ENCODE measurements at regions of chr5 and their contacts with region 1.

Region 1: GRCh38 chr5:27020973-27021372 is 17.4 kb downstream of the CDH9 start:
- DNase-seq: peak; percentile 48
- H3K4me3 Mint-ChIP-seq: no peak overlapping the region
- H3K27ac Mint-ChIP-seq: no peak overlapping the region
- H3K4me1 Mint-ChIP-seq: no peaks in the 10 kb centered on the region
- H3K27me3 Mint-ChIP-seq: no peaks in the 10 kb centered on the region
- CTCF ChIP-seq: peak; percentile 51

Region 2: DNA sequence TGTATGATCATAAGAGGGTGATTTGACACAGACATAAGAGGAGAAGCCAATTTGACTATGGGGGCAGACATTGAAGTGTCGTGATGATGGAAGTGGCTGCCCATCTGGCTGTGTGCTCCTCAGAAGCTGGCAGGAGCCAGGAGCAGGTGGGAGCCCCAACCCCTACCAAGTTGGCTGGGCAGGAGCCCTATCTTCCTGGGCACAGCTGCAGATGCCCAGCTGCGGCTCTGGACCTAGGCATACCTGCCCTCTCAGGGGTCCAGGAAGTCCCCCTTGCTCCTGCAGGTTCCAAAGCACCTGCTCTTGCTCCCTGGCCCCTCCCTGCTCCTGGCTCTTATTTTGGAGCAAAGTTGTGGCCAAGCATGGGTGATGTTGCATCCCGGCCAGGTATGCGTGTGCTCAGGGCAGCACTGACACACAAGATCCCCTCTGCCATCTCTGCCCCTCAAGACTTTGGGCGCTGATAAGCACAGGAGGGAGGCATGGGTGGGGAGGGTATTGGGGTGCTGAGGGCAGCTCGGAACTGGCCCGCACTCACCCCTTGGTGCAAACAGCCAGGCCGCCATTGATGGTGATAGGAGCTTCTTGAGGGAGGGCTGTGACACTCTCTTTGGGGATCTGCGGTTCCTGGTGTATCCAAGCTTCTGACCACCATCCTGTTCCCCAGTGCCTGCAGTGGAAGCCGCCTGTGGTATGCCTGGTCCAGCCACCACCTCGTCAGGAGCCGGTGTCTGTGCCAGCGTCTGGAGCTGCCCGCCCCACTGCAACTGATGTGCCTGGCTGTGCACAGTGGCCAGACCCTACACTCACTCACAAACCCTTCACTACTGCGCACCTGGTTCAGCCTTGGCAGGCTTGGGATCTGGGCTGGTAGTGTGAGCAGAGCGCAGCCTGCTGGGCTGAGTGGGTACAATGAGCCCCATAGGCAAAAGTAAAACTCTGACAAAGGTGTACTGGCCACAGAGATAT is 213.5 kb before region 1 on chr5:
- CTCF ChIA-PET with region 1: no interaction called
- POLR2A ChIA-PET with region 1: no interaction called
- intact Hi-C with region 1: no loop called
- DNase-seq: no peak
- H3K4me3 Mint-ChIP-seq: no peak overlapping the region
- H3K27ac Mint-ChIP-seq: no peak overlapping the region
- H3K4me1 Mint-ChIP-seq: no peaks in the 10 kb centered on the region
- H3K27me3 Mint-ChIP-seq: no peaks in the 10 kb centered on the region
- CTCF ChIP-seq: no peak

Region 3: GRCh38 chr5:27241569-27242251 is 220.7 kb after region 1 on chr5:
- CTCF ChIA-PET with region 1: no interaction called
- POLR2A ChIA-PET with region 1: no interaction called
- intact Hi-C with region 1: loop called (anchors 5 kb)
- DNase-seq: peak; percentile 94
- H3K4me3 Mint-ChIP-seq: peak overlapping the region; percentile 52
- H3K27ac Mint-ChIP-seq: peak overlapping the region; percentile 96
- H3K4me1 Mint-ChIP-seq: peaks cover 24% of the 10 kb centered on the region
- H3K27me3 Mint-ChIP-seq: no peaks in the 10 kb centered on the region
- CTCF ChIP-seq: peak; percentile 31

Region 4: GRCh38 chr5:28344803-28345433 is 1323.9 kb after region 1 on chr5:
- CTCF ChIA-PET with region 1: no interaction called
- POLR2A ChIA-PET with region 1: no interaction called
- intact Hi-C with region 1: loop called (anchors 5 kb)
- DNase-seq: peak; percentile 60
- H3K4me3 Mint-ChIP-seq: no peak overlapping the region
- H3K27ac Mint-ChIP-seq: no peak overlapping the region
- H3K4me1 Mint-ChIP-seq: no peaks in the 10 kb centered on the region
- H3K27me3 Mint-ChIP-seq: no peaks in the 10 kb centered on the region
- CTCF ChIP-seq: peak; percentile 64

Region 5: DNA sequence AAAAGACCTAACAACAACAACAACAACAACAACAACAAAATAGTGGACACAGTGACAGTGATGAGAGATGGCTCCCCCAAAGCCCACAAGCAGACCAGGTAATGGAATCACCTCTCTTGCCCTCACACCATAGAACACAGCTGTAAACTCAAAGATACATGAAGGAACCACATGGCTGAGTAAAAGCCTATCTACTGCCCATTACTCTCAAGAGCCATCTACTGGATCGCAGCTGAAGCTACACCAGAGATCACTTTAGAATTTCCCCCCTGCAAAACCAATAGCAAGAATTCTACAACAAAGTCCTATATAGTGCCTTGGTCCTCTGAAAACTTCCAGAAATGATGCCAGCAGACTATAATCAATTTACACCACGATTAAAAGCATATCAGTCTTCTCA is 1555.0 kb after region 1 on chr5:
- CTCF ChIA-PET with region 1: no interaction called
- POLR2A ChIA-PET with region 1: no interaction called
- intact Hi-C with region 1: loop called (anchors 10 kb)
- DNase-seq: peak; percentile 22
- H3K4me3 Mint-ChIP-seq: no peak overlapping the region
- H3K27ac Mint-ChIP-seq: no peak overlapping the region
- H3K4me1 Mint-ChIP-seq: peaks cover 25% of the 10 kb centered on the region
- H3K27me3 Mint-ChIP-seq: no peaks in the 10 kb centered on the region
- CTCF ChIP-seq: peak; percentile 25

Region 6: DNA sequence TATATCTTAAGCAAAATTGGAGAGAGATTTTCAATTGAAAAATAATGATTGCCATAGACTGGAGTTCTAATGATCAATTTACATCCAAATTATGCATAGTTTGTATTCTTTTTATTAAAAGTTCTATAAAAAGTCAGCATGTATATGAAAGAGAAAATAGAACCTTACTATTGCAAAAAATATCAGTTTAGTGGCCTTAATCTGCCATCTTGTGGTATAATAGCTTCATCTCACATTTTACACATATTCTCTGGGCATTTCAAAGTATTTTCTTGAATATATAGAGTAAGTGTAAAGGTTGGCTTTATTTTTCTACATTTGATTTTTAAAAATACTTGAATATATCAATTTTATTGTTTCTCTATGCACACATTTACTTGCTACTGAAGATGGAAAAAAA is 1876.0 kb after region 1 on chr5:
- CTCF ChIA-PET with region 1: no interaction called
- POLR2A ChIA-PET with region 1: no interaction called
- intact Hi-C with region 1: loop called (anchors 10 kb)
- DNase-seq: peak; percentile 34
- H3K4me3 Mint-ChIP-seq: no peak overlapping the region
- H3K27ac Mint-ChIP-seq: no peak overlapping the region
- H3K4me1 Mint-ChIP-seq: peaks cover 7% of the 10 kb centered on the region
- H3K27me3 Mint-ChIP-seq: no peaks in the 10 kb centered on the region
- CTCF ChIP-seq: peak; percentile 31